Cardiac septum (tissue), 1 donor: ENCODE measurements at regions of chr12 and their contacts with region 1.

Region 1: DNA sequence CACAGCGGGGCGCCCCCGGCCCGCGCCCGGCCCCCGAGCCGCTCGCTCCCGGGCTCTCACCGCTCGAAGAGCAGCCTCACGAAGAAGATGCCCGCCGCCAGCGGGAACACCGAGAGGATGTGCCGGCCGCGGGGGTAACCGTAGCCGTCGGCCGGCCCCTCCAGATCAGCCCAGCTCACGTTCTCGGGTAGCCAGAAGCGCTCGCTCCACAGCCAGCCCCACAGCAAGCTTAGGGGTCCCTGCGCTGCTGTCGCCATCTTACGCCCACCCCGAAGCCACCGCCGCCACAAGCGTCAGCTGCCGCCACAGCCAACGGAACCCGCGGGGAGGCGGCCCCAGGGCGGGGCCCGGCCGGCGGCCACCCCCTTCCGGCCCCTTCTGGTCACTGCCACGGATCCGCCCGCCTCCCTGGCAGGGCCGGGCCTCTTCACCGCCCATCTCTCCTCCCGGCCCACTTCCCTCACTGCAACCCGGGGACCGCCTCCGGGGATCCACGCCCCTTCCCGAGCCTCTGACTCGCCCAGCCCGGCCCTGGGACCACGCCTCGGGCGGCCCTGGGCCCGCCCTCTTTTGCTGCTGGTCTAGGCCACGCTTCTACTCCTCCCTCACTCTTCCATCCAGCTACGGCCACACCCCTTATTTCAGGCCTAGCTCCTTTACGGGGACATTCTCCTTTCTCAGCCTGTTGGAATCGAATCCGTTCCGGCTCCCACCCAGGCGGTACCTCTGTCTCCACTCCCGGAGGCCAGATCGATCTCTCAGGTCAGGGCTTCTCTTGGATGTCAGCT is at the start of gene CERS5:
- DNase-seq: peak; percentile 99
- total RNA-seq, gene CERS5: 18.9 TPM

Region 2: DNA sequence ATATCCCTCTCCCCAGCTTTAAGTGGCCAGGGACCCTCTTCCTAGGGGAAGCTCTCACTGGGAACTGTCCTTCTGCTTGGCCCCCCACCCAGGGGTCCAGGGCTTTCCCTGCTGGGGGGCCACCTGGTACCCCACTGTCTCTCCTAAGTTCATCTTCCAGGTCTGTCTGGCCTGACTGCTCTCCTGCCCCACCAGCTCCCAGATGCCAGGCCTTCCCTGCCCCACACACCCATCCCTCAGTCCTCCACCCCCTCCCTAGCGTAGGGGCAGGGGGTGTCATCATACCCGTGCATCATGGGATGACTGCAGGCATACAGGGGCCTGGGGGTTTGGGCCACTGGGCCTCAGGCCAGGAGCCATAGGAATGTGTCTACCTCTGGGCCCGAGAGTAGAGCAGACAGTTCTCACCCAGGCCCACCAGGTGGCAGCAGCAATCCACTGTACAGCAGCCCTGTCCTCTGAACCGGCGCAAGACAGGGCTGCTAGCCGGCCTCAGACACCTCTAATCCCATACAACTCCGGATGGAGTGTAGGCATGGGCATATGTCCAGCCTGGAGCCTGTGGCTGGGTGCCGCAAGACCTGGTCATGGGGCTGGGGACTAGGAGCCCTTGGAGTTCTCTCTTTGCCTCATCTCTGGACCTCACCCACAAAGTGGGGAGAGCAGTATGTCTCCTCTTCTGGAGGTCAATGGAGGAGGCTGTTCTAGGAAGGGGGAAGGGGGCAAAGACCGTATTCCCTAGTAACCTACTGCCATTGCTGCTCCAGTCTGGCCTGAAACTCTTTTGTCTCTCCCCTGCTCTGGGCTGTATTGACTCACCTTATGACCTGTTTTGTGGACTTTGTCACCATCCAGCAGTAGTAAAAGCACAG is 92.1 kb before region 1 on chr12:
- intact Hi-C with region 1: no loop called
- DNase-seq: peak; percentile 92

Region 3: DNA sequence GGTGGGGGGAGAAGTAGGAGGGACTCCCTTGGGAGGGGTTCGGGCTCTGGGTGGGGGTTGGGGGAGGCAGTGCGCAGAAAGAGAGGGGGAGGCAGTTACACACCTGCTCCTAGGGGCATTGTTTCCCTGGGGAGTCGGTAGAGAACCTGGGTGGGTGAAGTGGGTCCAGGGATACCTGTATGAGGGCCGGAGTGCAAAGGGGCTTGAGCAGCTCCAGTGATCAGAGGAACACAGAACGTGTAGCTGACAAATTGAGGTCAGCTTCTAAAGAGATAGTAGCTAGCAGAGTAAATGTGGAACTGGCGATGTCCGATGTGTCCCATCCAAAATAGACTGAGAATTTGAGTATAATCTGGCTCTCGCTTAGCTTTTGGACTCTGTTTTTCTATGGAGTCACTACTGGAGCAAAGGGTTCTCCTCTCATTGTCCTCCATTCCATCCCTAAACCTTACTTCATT is 81.6 kb before region 1 on chr12:
- intact Hi-C with region 1: loop called (anchors 2 kb)
- DNase-seq: no peak

Region 4: DNA sequence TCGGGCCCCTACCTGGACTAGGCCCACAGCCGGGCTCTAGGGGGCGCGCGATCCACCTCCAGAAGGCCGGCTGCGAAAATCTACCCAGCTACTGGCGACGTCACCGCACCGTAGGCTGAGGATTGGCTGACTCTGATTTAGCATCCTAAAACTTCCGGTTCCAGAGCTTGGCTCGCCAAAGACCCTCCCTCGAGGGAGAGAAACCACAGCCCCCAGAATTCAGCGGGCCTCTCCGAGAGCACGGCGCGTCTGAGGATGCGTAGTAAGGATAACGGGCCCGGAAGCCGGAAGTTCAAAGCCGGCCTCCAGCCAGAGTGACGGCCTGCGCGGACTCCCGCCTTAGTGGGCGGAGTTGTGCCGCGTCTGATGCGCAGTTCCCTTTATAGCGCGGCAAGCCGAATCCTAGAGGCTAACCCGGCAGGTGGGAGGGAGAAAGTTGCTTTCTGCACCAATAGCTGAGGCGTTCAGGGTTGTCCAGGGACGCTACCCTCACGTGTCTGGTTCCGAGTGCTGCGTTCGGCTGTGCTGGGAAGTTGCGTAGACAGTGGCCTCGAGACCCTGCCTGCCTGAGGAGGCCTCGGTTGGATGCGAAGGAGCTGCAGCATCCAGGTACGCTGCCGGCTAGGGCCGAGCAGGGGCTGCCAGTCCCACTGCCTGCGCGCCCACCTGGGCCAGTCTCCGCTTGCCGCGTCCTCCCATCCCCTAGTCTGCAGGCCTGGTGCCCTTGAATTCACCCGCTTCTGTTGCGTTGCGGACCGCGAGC is 55.4 kb before region 1 on chr12 and contains the start of gene COX14:
- intact Hi-C with region 1: loop called (anchors 10 kb)
- DNase-seq: peak; percentile 100
- total RNA-seq, gene COX14: 152 TPM

Region 5: DNA sequence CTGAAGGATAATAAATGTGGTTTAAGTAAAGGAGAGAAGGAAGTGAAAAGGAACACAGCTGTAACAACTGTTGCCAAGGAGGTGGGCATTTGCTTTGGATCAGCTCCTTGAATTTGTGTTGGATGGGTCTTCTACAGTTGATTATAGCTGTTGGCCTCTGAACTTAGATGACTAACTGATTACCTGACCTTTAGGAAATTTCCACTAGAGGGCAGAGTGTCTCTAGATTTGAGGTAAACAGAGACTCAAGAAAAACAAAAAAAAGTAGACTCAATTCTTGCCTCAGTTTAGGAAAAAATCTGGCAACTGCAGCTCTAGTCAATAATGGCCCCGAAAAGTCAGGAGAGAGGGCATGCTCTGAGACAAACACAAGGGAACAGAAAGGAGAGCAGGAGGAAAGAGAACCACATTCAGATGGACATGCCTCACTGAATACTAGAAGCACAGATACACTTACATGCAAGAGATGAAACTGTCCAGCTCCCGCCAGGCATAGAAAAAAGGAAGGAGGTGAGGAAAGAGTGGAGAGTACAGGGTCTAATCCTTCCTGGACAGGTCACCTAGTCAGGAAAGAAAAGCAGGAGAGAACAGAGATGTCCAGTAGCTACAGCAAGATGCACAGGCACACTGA is 34.6 kb before region 1 on chr12:
- intact Hi-C with region 1: loop called (anchors 5 kb)
- DNase-seq: no peak